ENCODE measurements at regions of chr1 and their contacts with region 1.

Region 1: DNA sequence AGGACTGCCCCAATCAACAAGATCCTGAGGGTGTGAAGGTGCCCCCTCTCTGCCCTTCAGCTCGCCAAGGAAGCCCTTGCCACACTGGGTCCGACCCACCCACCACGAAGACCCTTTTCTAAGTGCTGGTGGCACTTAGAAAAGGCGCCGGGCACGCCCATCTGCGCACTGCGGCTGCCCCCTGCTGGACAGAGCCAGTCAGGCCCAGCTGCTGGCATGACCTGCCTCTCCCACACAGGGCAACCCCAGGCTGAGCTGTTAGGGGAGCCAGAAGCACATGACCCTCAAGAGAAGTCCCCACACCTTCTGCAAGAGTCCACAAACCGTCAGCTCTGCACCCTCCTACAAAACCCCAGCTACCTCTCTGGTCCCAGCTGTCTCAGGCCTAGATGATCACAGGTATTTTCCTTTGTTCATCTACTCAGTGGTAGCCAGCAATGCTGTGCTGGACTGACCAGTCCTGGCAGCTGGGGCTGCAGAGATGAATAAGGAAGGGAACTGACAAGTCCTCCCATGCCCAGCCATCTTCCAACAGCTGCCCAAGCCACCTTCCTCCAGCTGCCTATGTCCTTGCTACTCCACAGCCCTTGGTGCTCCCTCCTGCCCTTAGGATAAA is 40.0 kb upstream of the ZC3H12A start:
- DNase-seq: peak; percentile 69
- ATAC-seq: peak; percentile 85
- H3K4me3 Mint-ChIP-seq: no peak overlapping the region
- H3K27ac Mint-ChIP-seq: no peak overlapping the region
- H3K4me1 Mint-ChIP-seq: no peaks in the 10 kb centered on the region
- H3K27me3 Mint-ChIP-seq: peaks cover 16% of the 10 kb centered on the region
- CTCF ChIP-seq: no peak

Region 2: DNA sequence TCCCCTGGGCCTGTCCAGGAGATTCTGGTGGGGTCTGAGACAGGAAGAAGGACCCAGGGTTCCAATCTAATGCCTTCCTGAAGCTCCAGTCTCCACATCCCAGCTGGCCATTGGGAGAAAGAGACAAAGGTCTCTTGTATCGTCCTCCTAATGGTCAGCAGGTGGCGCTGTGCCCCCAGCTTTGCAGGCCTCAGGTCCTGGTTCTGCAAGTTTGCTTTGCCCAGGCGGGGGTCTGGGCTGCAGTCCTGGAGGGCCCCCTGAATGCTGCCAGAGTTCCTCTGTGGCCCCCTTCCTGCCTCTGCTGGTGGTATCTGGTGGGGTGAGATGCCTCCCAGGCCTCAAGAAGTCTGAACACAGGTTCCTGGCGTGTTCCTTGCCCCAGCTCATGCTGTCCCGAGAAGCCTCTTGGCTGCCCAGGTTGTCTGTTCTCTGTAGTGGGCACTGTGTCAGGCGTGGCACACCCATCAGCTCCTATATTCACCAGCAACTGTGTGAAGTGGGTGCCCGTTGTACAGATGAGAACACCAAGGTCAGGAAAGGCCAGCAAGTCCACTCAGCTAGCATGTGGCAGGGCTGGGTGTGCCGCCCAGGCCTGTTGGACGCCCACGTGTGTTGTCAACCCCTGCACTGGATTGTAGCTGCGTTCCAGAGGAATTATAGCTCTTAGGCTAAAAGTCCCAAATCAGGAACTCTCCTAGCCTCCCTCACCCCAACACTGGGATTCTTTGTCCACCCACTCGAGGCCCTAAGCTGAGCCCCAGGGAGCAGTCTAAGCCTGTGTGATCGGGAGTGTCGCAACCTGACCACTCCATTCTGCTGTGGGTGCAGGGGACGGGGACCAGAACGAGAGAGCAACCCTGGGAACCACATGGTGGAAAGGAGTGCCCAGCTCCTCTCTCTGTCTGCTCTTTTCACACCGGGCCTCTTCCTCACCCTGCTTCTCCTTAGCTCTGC is 917.8 kb before region 1 on chr1:
- CTCF ChIA-PET with region 1: interaction called, 18 read pairs
- POLR2A ChIA-PET with region 1: no interaction called
- intact Hi-C with region 1: loop called (anchors 1 kb)
- DNase-seq: peak; percentile 19
- ATAC-seq: no peak
- H3K4me3 Mint-ChIP-seq: no peak overlapping the region
- H3K27ac Mint-ChIP-seq: no peak overlapping the region
- H3K4me1 Mint-ChIP-seq: no peaks in the 10 kb centered on the region
- H3K27me3 Mint-ChIP-seq: no peaks in the 10 kb centered on the region
- CTCF ChIP-seq: no peak

Region 3: DNA sequence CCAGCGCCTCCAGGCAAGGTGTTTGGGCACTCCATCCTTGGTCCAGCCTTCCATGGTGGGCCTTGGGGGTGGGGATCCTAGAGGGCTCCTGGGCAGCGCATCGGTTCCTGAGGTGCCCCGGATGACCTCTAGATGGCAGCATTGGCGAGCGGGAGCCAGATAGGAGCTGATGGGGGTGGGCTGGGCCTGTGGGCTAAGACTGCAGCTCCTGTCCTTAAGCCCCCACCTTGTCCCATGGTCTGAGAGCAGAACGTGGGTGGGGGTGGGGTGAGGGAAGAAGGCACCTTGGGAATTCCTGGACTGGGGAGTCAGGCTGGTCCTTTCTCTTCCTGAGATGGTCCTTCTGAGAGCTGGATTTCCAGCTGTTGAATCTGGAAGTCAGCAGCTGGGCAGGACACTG is 858.3 kb before region 1 on chr1:
- CTCF ChIA-PET with region 1: interaction called, 27 read pairs
- POLR2A ChIA-PET with region 1: no interaction called
- intact Hi-C with region 1: loop called (anchors 1 kb)
- DNase-seq: peak; percentile 46
- ATAC-seq: peak; percentile 62
- H3K4me3 Mint-ChIP-seq: no peak overlapping the region
- H3K27ac Mint-ChIP-seq: no peak overlapping the region
- H3K4me1 Mint-ChIP-seq: no peaks in the 10 kb centered on the region
- H3K27me3 Mint-ChIP-seq: peaks cover 29% of the 10 kb centered on the region
- CTCF ChIP-seq: no peak

Region 4: GRCh38 chr1:36703526-36704208 is 730.7 kb before region 1 on chr1:
- CTCF ChIA-PET with region 1: no interaction called
- POLR2A ChIA-PET with region 1: no interaction called
- intact Hi-C with region 1: loop called (anchors 1 kb)
- DNase-seq: peak; percentile 51
- ATAC-seq: peak; percentile 80
- H3K4me3 Mint-ChIP-seq: no peak overlapping the region
- H3K27ac Mint-ChIP-seq: no peak overlapping the region
- H3K4me1 Mint-ChIP-seq: peaks cover 4% of the 10 kb centered on the region
- H3K27me3 Mint-ChIP-seq: peaks cover 34% of the 10 kb centered on the region
- CTCF ChIP-seq: peak; percentile 47

Region 5: GRCh38 chr1:37323486-37324377 is 110.7 kb before region 1 on chr1:
- CTCF ChIA-PET with region 1: no interaction called
- POLR2A ChIA-PET with region 1: no interaction called
- intact Hi-C with region 1: loop called (anchors 2 kb)
- DNase-seq: no peak
- ATAC-seq: no peak
- H3K4me3 Mint-ChIP-seq: no peak overlapping the region
- H3K27ac Mint-ChIP-seq: no peak overlapping the region
- H3K4me1 Mint-ChIP-seq: peaks cover 17% of the 10 kb centered on the region
- H3K27me3 Mint-ChIP-seq: peaks cover 13% of the 10 kb centered on the region
- CTCF ChIP-seq: peak; percentile 63